ENCODE measurements at regions of chr4 and their contacts with region 1.

Region 1: GRCh38 chr4:100823066-100823992 is 305.5 kb upstream of the EMCN start:
- DNase-seq: peak; percentile 53
- H3K4me3 Mint-ChIP-seq: no peak overlapping the region
- H3K27ac Mint-ChIP-seq: peak overlapping the region; percentile 82
- H3K4me1 Mint-ChIP-seq: peaks cover 9% of the 10 kb centered on the region
- H3K27me3 Mint-ChIP-seq: peaks cover under 1% of the 10 kb centered on the region

Region 2: DNA sequence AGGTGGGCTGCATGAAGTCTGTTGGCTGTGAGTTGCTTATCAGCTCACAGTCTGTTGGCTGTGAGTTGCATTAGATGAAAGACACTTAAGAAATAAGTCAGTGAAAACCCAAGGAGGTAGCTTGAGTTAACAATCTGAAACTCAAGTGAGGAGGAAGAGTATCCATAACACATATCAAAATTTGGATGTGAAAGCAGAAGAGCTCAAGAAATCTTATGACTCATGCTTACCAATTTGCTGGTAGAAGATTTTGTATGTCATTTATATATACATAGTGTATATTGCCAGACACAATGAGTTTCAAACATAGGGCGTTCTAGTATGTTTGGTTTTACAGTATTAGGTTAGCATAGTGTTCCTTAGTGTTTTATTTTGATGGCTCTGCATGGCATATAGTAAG is 740.5 kb before region 1 on chr4:
- CTCF ChIA-PET with region 1: no interaction called
- intact Hi-C with region 1: loop called (anchors 1 kb)
- DNase-seq: peak; percentile 35
- H3K4me3 Mint-ChIP-seq: no peak overlapping the region
- H3K27ac Mint-ChIP-seq: peak overlapping the region; percentile 89
- H3K4me1 Mint-ChIP-seq: peaks cover 72% of the 10 kb centered on the region
- H3K27me3 Mint-ChIP-seq: peaks cover 2% of the 10 kb centered on the region

Region 3: DNA sequence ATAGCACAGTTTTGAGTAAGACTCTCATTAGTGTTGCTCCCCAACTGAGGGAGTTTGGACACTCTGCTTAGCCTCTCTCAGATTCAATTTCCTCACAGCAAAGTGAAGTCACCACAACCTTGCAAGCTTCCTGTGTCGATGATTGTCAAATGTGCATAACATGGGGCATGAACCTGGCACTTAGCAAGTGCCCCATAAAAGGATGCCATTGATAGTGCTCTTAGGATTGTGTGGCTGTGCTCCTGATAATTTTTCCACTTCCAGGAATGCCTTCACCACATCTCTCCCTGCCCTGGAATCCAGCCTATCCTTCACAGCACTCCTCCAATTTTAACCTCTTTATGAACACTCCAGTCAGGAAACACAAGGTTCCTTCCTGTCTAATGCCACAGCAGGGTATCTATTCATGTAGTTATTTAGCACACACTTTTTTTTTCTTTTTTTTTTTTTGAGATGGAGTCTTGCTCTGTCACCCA is 214.6 kb after region 1 on chr4:
- CTCF ChIA-PET with region 1: no interaction called
- intact Hi-C with region 1: loop called (anchors 1 kb)
- DNase-seq: no peak
- H3K4me3 Mint-ChIP-seq: no peak overlapping the region
- H3K27ac Mint-ChIP-seq: no peak overlapping the region
- H3K4me1 Mint-ChIP-seq: peaks cover 13% of the 10 kb centered on the region
- H3K27me3 Mint-ChIP-seq: no peaks in the 10 kb centered on the region

Region 4: GRCh38 chr4:101156619-101157310 is 333.4 kb after region 1 on chr4:
- CTCF ChIA-PET with region 1: no interaction called
- intact Hi-C with region 1: loop called (anchors 1 kb)
- DNase-seq: no peak
- H3K4me3 Mint-ChIP-seq: no peak overlapping the region
- H3K27ac Mint-ChIP-seq: no peak overlapping the region
- H3K4me1 Mint-ChIP-seq: peaks cover 28% of the 10 kb centered on the region
- H3K27me3 Mint-ChIP-seq: no peaks in the 10 kb centered on the region

Region 5: DNA sequence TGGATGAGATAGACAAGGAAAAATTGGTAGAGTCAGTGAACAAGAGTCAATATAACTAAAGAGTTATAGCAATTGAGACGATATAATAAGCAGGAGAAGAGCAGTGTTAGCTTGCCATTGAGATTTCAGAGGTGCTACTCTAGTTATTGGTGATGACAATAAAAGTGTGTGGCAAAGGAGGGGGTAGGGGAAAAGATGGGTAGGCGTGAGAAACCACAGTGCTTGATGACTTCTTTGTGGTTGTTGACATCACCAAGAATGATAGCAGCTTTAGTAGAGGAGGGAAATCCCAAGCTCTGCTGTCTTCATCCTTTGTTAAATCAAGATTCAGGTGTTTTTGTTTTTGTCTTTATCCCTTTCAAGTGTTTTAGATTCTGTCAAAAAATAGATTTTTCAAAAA is 703.9 kb after region 1 on chr4:
- CTCF ChIA-PET with region 1: no interaction called
- intact Hi-C with region 1: loop called (anchors 2 kb)
- DNase-seq: peak; percentile 88
- H3K4me3 Mint-ChIP-seq: no peak overlapping the region
- H3K27ac Mint-ChIP-seq: no peak overlapping the region
- H3K4me1 Mint-ChIP-seq: peaks cover 15% of the 10 kb centered on the region
- H3K27me3 Mint-ChIP-seq: peaks cover 45% of the 10 kb centered on the region